Mammary epithelial cell (primary cell): ENCODE measurements at regions of chr18 and their contacts with region 1.

Region 1: DNA sequence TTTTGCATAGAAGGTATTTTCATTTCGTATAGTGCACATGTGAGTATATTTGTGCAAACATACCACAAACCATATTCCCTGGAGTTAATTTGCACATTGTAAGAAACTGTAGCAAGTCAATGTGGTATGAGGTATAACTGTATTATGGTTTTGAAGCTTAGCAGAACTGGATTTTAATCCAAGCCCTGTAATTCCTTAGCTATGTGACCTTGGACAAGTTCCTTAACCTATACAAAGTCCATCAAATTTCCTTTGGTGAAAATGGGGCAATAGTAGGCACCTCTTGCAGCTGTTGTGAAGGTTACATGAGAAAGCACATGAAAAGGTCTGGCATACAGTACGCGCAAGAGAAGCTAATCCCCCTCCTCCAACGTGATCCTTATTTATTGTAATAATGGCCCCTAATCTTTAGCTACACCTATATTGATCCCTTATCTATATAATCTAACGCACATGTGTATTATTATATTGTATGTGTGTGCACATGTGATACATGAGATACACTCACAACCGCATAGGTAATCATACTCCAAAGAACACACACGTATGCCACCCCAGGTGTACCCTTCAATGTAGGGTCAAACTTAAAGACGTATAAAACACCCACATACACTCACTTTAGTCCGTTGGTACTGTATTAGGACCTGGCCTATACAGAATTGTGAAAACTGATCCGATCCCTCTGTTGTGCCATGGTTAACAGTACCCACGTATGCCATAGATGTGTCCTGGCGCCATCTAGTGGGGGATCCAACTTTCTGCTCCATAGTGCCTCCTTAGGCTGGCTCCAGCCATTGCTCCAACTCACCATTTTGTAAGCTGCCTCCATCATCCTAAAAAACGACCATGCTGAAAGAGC is 402.9 kb upstream of the SLC14A2 start:
- DNase-seq: peak; percentile 63
- H3K4me3 ChIP-seq: no peak overlapping the region
- H3K27ac ChIP-seq: no peak overlapping the region
- H3K4me1 ChIP-seq: no peaks in the 10 kb centered on the region
- H3K27me3 ChIP-seq: no peaks in the 10 kb centered on the region
- CTCF ChIP-seq: peak; percentile 100

Region 2: GRCh38 chr18:43620936-43621335 is 1591.5 kb before region 1 on chr18:
- CTCF ChIA-PET with region 1: no interaction called
- dilution Hi-C with region 1: no loop called
- in situ Hi-C with region 1: no loop called
- intact Hi-C with region 1: loop called (anchors 5 kb)
- DNase-seq: peak; percentile 20
- H3K4me3 ChIP-seq: no peak overlapping the region
- H3K27ac ChIP-seq: no peak overlapping the region
- H3K4me1 ChIP-seq: no peaks in the 10 kb centered on the region
- H3K27me3 ChIP-seq: peaks cover 3% of the 10 kb centered on the region
- CTCF ChIP-seq: peak; percentile 37 to 52

Region 3: DNA sequence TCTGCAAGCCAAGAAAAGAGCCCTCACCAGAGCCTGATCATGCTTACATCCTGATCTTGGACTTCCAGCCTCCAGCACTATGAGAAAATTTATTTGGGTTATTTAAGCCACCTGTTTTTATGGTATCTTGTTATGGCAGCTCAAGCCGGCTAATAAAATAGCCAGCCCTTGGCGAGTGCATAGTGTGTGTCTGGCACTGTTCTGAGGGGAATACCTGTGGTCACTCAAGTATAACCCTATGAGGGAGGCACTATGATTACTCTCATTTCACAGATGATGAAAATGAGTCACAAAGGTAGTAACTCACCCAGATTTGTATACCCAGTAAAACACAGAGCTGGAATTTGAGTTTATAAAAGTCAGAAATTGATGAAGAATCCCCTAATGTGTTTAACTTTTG is 1088.7 kb before region 1 on chr18:
- CTCF ChIA-PET with region 1: no interaction called
- dilution Hi-C with region 1: no loop called
- in situ Hi-C with region 1: loop called (anchors 25 kb)
- intact Hi-C with region 1: no loop called
- DNase-seq: peak; percentile 75
- H3K4me3 ChIP-seq: no peak overlapping the region
- H3K27ac ChIP-seq: peak overlapping the region; percentile 7
- H3K4me1 ChIP-seq: no peaks in the 10 kb centered on the region
- H3K27me3 ChIP-seq: no peaks in the 10 kb centered on the region
- CTCF ChIP-seq: no peak

Region 4: DNA sequence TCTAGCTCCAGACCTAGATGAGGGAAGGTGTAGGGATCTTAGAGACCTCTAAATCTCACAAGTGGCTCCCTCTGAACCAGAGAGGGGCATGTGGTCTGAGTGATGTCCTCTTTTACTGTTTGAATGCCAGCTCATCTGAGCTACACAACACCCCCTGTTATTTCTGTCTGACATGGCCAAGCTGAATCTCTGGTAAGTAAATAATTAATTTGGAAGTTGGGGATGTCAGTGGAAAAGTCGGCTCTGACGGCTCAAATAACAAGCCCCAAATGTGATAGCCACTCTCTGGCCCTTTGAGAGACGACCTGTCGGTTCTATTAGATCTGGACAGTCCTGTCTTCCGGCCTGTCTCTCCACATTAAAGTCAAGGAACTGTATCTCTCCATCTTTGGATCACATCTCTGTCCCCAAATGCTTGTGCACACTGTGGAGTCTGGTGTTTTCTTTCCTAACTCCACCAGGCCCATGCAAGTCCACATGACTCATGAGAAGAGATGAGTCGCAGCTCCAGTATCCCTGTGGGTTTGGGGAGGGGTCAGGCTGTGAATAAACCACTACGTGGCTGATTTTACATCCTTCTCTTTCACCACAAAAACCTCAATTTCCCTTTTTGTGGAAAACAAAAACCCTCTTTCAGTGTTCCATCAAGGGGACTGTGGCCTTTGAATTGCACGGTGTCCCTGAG is 479.2 kb before region 1 on chr18:
- CTCF ChIA-PET with region 1: no interaction called
- dilution Hi-C with region 1: no loop called
- in situ Hi-C with region 1: no loop called
- intact Hi-C with region 1: loop called (anchors 10 kb)
- DNase-seq: peak; percentile 93
- H3K4me3 ChIP-seq: no peak overlapping the region
- H3K27ac ChIP-seq: peak overlapping the region; percentile 88
- H3K4me1 ChIP-seq: peaks cover 56% of the 10 kb centered on the region
- H3K27me3 ChIP-seq: no peaks in the 10 kb centered on the region
- CTCF ChIP-seq: no peak

Region 5: DNA sequence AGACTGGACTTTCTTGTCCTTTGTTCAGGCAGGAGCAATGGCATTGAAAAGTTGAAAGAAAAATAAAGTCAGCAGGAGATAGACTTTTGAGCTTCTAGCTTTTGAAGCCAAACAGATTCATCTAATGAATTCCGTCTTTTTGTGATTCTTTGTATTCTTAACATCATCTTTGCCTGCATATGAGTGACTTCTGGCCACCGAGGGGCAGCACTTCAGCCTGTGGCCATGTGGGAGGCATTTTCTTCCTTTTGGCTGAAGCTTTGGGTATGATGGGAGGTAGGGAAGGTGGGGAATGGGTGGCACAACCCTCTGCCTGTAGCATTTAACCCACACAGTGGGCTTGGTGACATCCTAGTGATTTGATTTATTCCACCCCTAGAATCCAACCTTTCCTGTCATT is 311.1 kb before region 1 on chr18:
- CTCF ChIA-PET with region 1: no interaction called
- dilution Hi-C with region 1: no loop called
- in situ Hi-C with region 1: loop called (anchors 25 kb)
- intact Hi-C with region 1: loop called (anchors 1 kb)
- DNase-seq: no peak
- H3K4me3 ChIP-seq: no peak overlapping the region
- H3K27ac ChIP-seq: no peak overlapping the region
- H3K4me1 ChIP-seq: peaks cover 14% of the 10 kb centered on the region
- H3K27me3 ChIP-seq: no peaks in the 10 kb centered on the region
- CTCF ChIP-seq: peak; percentile 25 to 40

Region 6: GRCh38 chr18:45014047-45014501 is 198.3 kb before region 1 on chr18:
- CTCF ChIA-PET with region 1: interaction called, 10 read pairs
- dilution Hi-C with region 1: no loop called
- in situ Hi-C with region 1: no loop called
- intact Hi-C with region 1: loop called (anchors 1 kb)
- DNase-seq: peak; percentile 91
- H3K4me3 ChIP-seq: no peak overlapping the region
- H3K27ac ChIP-seq: no peak overlapping the region
- H3K4me1 ChIP-seq: peaks cover 48% of the 10 kb centered on the region
- H3K27me3 ChIP-seq: no peaks in the 10 kb centered on the region
- CTCF ChIP-seq: peak; percentile 30 to 42

Region 7: GRCh38 chr18:45652303-45653080 is 440.1 kb after region 1 on chr18:
- CTCF ChIA-PET with region 1: no interaction called
- dilution Hi-C with region 1: no loop called
- in situ Hi-C with region 1: no loop called
- intact Hi-C with region 1: no loop called
- DNase-seq: peak; percentile 50
- H3K4me3 ChIP-seq: no peak overlapping the region
- H3K27ac ChIP-seq: no peak overlapping the region
- H3K4me1 ChIP-seq: peaks cover 8% of the 10 kb centered on the region
- H3K27me3 ChIP-seq: no peaks in the 10 kb centered on the region
- CTCF ChIP-seq: no peak